Endothelial cell of umbilical vein (primary cell): ENCODE measurements at regions of chr5 and their contacts with region 1.

Region 1: DNA sequence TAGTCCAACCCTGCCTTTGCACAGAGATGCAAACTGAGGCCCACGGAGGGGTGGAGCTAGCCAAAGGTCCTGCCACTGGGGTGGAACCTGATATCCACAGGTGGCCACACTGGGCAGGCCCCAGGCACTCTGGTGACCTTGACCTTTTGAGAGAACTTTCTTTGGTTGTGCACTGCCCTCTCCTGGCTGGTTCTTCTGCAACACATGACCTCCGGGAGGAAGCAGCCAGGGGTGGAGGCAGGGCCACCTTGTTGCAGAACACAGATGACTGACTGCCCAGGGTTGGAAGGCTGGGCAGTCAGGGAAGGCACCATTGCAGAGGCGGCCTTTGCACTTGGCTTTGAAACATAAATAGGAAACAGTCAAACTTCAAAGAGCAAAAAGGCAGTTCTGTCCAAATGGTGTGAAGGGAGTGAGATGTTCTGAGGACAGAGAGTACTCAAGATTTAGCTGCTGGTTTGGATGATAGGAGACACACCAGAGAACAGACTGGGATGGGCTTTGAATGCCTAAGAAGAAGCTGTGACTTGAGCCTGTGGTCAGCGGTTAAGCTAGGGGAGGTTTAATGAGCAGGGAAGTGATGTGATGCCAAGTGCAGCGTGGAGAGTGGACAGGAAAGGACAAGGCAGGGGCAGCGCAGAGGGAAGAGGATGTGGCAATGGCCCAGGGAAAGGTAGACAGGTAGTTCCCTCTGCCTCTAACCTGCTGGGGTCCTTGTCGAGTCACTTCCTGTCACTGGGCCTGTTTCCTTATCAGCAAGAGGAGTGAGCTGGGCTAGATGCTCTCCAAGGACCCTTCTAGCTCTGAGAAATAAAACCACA is 6.8 kb upstream of the TCOF1 start:
- DNase-seq: peak; percentile 49
- H3K4me3 ChIP-seq: no peak overlapping the region
- H3K27ac ChIP-seq: no peak overlapping the region
- H3K4me1 ChIP-seq: no peaks in the 10 kb centered on the region
- H3K27me3 ChIP-seq: no peaks in the 10 kb centered on the region
- CTCF ChIP-seq: peak; percentile 51 to 56
- POLR2A ChIP-seq: no peak

Region 2: DNA sequence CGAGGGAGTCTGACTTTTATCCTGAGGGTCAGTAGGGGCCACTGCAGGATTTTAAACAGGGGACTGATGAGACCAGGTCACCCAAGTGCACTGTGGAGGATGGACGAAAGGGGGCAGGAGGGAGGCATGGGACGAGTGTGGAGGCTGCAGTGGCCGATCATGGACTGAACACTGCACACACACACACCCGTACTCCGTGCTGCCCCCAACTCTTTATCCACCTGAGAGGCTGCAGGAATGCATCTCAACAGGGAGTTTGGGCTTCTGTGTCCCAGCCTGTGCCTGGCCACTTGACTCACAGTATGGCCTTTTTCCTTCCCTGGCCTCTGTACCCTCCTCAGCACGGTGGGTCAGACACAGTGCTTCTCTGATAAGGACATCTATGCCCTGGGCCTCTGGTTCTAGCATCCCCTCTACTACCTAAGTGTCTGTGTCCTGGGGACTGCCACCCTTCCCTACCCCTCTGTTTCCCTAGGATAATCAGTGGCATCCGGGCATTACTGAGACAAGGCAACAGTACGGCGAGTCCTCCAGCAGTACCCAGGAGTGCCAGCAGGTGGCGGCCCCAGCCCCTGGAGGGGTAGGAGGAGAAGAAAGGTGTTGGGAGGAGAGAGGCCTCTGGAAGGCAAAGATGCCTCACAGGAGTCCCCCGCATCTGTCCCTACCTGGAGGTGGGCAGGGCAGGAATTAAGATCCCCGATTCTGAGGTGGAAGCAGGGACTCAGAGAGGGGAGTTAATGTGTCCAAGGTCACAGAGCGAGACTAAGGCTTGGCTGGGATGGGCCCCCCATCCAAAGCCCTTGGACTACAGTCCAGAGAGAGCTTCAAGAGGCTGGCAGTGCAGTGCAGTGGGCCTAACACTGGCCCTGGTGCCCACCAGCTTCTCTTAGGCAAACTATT is 189.2 kb before region 1 on chr5:
- CTCF ChIA-PET with region 1: interaction called, 10 read pairs
- POLR2A ChIA-PET with region 1: no interaction called
- dilution Hi-C with region 1: no loop called
- intact Hi-C with region 1: loop called (anchors 1 kb)
- DNase-seq: peak; percentile 59
- H3K4me3 ChIP-seq: no peak overlapping the region
- H3K27ac ChIP-seq: no peak overlapping the region
- H3K4me1 ChIP-seq: no peaks in the 10 kb centered on the region
- H3K27me3 ChIP-seq: peaks cover 6 to 7% of the 10 kb centered on the region in 2 experiments
- CTCF ChIP-seq: peak; percentile 94 to 97
- POLR2A ChIP-seq: no peak

Region 3: DNA sequence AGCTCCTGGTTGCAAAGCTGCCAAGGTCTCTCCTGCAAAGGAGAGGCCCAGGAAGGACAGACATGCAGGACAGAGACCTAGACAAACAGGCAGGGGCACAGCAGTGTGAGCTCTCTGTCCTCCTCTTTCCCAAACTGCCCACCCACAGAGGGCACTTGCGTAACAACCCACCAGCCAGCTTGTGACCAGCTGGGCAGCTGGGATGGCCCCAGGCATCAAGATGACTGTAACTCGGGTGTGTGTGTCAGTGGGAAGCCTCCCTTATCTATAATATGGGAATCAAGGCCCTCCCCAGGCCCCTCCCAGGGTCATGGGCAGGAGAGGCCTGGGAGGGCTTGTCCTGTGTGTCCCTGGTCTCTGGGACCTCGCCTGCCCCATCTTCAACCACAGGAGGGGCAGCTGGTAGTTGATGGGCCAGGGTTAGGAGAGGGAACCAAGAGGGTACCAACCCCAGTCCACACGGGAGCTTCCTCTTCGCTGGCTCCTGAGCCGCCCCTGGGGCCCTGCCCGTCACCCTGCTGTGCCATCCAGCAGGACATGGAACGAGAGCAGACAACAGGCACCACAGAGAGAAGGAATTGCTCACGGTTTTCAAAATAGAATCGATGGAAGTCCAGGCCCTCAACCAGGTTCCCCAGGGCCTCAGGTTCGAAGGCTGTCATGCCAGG is 123.0 kb before region 1 on chr5:
- CTCF ChIA-PET with region 1: no interaction called
- POLR2A ChIA-PET with region 1: no interaction called
- dilution Hi-C with region 1: no loop called
- intact Hi-C with region 1: no loop called
- DNase-seq: no peak
- H3K4me3 ChIP-seq: no peak overlapping the region
- H3K27ac ChIP-seq: no peak overlapping the region
- H3K4me1 ChIP-seq: no peaks in the 10 kb centered on the region
- H3K27me3 ChIP-seq: no peaks in the 10 kb centered on the region
- CTCF ChIP-seq: no peak
- POLR2A ChIP-seq: no peak

Region 4: GRCh38 chr5:150272526-150272925 is 78.2 kb before region 1 on chr5:
- CTCF ChIA-PET with region 1: interaction called, 25 read pairs
- POLR2A ChIA-PET with region 1: no interaction called
- dilution Hi-C with region 1: no loop called
- intact Hi-C with region 1: loop called (anchors 1 kb)
- DNase-seq: peak; percentile 18
- H3K4me3 ChIP-seq: no peak overlapping the region
- H3K27ac ChIP-seq: no peak overlapping the region
- H3K4me1 ChIP-seq: no peaks in the 10 kb centered on the region
- H3K27me3 ChIP-seq: peaks cover 9 to 19% of the 10 kb centered on the region in 2 experiments
- CTCF ChIP-seq: peak in 1 of 2 donors; percentile 42
- POLR2A ChIP-seq: no peak

Region 5: GRCh38 chr5:150836703-150837102 is 486.0 kb after region 1 on chr5:
- CTCF ChIA-PET with region 1: no interaction called
- POLR2A ChIA-PET with region 1: no interaction called
- dilution Hi-C with region 1: no loop called
- intact Hi-C with region 1: no loop called
- DNase-seq: no peak
- H3K4me3 ChIP-seq: no peak overlapping the region
- H3K27ac ChIP-seq: no peak overlapping the region
- H3K4me1 ChIP-seq: no peaks in the 10 kb centered on the region
- H3K27me3 ChIP-seq: peaks cover 2 to 3% of the 10 kb centered on the region in 2 experiments
- CTCF ChIP-seq: no peak
- POLR2A ChIP-seq: no peak